ENCODE measurements at regions of chrX and their contacts with region 1.

Region 1: GRCh38 chrX:54808605-54809483 is 1.3 kb downstream of the MAGED2 start:
- DNase-seq: peak; percentile 96
- ATAC-seq: peak; percentile 94

Region 2: GRCh38 chrX:54675762-54676161 is 133.1 kb before region 1 on chrX:
- intact Hi-C with region 1: no loop called
- DNase-seq: no peak
- ATAC-seq: no peak

Region 3: DNA sequence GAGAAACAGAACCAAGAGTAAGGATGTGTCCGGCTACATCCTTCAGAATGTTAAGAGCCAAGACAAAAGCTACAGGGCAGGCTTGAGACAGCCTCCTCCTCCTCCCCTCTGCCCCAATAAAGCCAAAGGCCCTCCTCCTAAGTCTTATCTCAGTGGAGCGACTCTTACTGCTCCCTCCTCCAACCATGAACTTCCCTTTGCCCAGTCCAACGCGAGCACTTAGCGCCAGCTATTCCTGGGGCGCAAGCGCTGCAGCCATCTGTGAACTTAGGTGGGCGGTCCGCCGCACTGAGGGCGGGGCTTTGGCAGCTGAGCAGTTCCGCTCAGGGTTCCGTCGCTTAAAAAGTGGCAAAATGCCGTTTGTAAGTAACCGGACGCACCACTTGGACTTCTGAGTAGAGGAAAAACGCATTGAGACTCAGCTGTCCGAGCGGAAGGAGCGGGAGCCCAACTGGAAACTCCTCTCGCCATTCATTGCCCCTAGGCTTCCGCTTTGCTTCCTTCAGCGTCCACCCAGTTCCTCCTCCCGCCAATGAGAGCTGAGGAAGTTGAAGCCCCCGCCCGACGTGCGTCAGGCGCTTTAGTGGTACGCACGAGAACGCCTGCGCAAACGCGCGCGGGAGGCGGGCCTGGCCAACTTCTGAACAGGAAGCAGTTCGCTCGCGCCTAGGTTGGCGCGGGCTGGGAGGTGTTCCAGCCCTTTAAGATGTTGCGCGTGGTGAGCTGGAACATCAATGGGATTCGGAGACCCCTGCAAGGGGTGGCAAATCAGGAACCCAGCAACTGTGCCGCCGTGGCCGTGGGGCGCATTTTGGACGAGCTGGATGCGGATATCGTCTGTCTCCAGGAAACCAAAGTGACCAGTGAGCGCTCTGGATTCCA is 191.1 kb after region 1 on chrX and contains the start of gene APEX2:
- intact Hi-C with region 1: loop called (anchors 5 kb)
- DNase-seq: peak; percentile 97
- ATAC-seq: peak; percentile 97
- total RNA-seq, gene APEX2: 8.3 TPM

Measured in Right ventricle myocardium inferior (tissue), 1 donor.